ENCODE measurements at regions of chr17 and their contacts with region 1.

Region 1: GRCh38 chr17:50638851-50639767 is 4.4 kb downstream of the ABCC3 start:
- DNase-seq: peak; percentile 98
- H3K4me3 Mint-ChIP-seq: peak overlapping the region; percentile 69
- H3K27ac Mint-ChIP-seq: peak overlapping the region; percentile 37
- H3K4me1 Mint-ChIP-seq: peaks cover 70% of the 10 kb centered on the region
- H3K27me3 Mint-ChIP-seq: peaks cover under 1% of the 10 kb centered on the region
- CTCF ChIP-seq: no peak

Region 2: GRCh38 chr17:50626037-50626574 is 13.0 kb before region 1 on chr17:
- CTCF ChIA-PET with region 1: interaction called, 26 read pairs
- intact Hi-C with region 1: no loop called
- DNase-seq: peak; percentile 89
- H3K4me3 Mint-ChIP-seq: no peak overlapping the region
- H3K27ac Mint-ChIP-seq: no peak overlapping the region
- H3K4me1 Mint-ChIP-seq: peaks cover 28% of the 10 kb centered on the region
- H3K27me3 Mint-ChIP-seq: peaks cover 14% of the 10 kb centered on the region
- CTCF ChIP-seq: peak; percentile 96

Region 3: DNA sequence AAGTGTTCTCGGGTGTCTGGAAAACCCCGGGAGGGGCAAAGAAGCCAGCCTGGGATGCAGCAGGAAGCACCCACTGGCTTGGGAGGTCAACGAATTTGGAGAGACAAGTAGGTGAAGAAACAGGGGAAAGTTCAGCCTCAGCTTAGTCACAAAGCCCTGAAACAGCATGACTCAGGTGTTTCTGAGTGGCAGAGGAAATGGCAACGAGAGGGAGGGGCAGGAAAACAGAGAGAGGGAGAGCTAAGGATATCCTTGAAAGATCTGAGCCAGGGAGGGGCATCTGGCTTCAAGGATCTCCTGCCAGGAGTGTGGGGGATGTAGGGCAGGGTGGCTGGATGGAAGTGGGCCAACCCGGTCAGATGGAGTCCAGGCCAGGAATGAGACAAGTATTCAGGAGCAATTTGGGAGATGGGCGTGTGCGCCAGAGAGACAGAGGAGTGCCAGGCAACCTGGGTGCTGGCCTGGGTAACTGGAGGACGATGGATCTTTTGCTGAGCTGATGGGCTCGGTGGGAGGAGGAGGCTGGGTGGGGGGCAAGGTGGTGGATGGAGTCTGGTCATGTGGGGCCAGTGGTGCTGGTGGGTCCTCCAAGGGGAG is 22.8 kb after region 1 on chr17:
- CTCF ChIA-PET with region 1: interaction called, 29 read pairs
- intact Hi-C with region 1: no loop called
- DNase-seq: peak; percentile 86
- H3K4me3 Mint-ChIP-seq: peak overlapping the region; percentile 29
- H3K27ac Mint-ChIP-seq: peak overlapping the region; percentile 86
- H3K4me1 Mint-ChIP-seq: peaks cover 49% of the 10 kb centered on the region
- H3K27me3 Mint-ChIP-seq: no peaks in the 10 kb centered on the region
- CTCF ChIP-seq: no peak

Measured in Calu3 (cell line).